Activated naive CD8-positive, alpha-beta T cell treated with anti-CD3 and anti-CD28 coated beads, Interleukin-2, amount 10 ng/mL, durations not matched to agents 7 days and 5 days (primary cell): ENCODE measurements at regions of chr1 and their contacts with region 1.

Region 1: GRCh38 chr1:145978854-145979759 is 14.6 kb downstream of the POLR3GL start:
- DNase-seq: peak; percentile 72
- ATAC-seq: peak; percentile 89
- H3K4me3 Mint-ChIP-seq: no peak overlapping the region
- H3K27ac Mint-ChIP-seq: no peak overlapping the region
- H3K4me1 Mint-ChIP-seq: peaks cover 27% of the 10 kb centered on the region
- H3K27me3 Mint-ChIP-seq: no peaks in the 10 kb centered on the region

Region 2: DNA sequence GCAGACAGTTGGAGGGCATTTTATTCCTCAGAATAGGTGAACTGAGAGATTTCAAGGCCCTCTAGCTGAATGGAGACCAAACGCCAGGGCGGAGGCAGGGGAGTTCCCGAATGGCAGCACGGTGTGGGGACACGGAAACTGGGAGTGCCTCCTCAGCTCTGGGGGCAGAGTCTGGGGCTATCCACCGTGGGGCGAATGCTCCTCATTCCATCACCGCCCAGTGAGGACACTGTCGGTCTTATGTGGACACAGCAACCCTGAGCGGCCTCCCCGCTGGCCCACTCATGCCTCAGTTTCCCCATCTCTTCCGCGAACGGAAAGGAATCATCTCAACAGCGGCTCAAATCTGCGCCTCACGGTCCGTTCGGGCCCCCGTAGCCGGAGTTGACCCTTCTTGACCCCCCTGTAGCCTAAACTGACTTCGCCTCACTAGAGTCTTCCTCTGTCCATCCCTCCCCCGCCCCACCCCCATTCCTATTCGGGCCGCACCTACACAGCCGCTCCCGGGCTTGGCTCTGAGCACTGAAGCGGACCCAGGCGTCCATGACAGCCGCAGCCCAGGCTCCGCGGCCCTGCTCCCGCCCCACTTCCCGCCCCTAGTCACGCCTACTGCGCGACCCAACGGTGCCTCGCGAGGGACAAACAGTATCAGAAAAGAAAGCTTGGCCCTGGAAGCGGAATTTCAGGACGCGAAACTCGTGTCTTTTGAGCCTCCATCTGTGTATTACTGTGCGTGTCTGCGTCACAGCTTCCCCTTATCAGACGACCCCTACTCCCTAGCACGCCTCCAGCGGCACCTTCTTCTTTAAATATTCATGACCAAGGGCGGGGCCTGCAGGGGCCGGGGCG is 60.7 kb before region 1 on chr1 and contains the start of gene PEX11B:
- POLR2A ChIA-PET with region 1: interaction called, 11 read pairs
- DNase-seq: peak; percentile 93
- ATAC-seq: peak; percentile 88
- H3K4me3 Mint-ChIP-seq: peak within 1 kb of the TSS; percentile 96
- H3K27ac Mint-ChIP-seq: peak within 1 kb of the TSS; percentile 98
- H3K4me1 Mint-ChIP-seq: peaks cover 34% of the 10 kb centered on the region
- H3K27me3 Mint-ChIP-seq: no peaks in the 10 kb centered on the region
- total RNA-seq, gene PEX11B: 31.0 to 35.8 TPM

Region 3: GRCh38 chr1:145927063-145927886 is 51.8 kb before region 1 on chr1 and contains the start of gene RBM8A:
- POLR2A ChIA-PET with region 1: interaction called, 23 read pairs
- DNase-seq: peak; percentile 83
- ATAC-seq: peak; percentile 96
- H3K4me3 Mint-ChIP-seq: no peak within 1 kb of the TSS
- H3K27ac Mint-ChIP-seq: peak within 1 kb of the TSS; percentile 93
- H3K4me1 Mint-ChIP-seq: peaks cover 17% of the 10 kb centered on the region
- H3K27me3 Mint-ChIP-seq: no peaks in the 10 kb centered on the region
- total RNA-seq, gene RBM8A: 157 to 160 TPM

Region 4: DNA sequence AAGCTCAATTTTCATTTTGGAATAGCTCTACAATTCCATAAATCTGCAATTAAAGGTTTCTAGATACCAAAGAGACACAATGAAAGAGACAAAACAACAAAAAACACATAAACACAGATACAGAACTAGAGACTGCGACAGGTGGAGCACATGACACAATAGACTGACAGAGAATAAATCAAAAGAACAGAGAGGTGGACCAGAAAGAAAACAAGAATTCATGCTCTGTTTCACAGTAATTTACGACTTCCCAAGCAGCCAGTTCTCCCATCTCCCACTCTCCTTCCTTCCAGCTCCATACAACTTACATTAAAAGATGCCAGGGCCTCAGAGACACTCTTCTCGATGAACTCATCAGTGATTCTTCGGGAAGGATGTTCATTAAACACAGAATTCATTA is 36.7 kb before region 1 on chr1:
- POLR2A ChIA-PET with region 1: no interaction called
- DNase-seq: no peak
- ATAC-seq: no peak
- H3K4me3 Mint-ChIP-seq: no peak overlapping the region
- H3K27ac Mint-ChIP-seq: no peak overlapping the region
- H3K4me1 Mint-ChIP-seq: peaks cover 2% of the 10 kb centered on the region
- H3K27me3 Mint-ChIP-seq: no peaks in the 10 kb centered on the region

Region 5: DNA sequence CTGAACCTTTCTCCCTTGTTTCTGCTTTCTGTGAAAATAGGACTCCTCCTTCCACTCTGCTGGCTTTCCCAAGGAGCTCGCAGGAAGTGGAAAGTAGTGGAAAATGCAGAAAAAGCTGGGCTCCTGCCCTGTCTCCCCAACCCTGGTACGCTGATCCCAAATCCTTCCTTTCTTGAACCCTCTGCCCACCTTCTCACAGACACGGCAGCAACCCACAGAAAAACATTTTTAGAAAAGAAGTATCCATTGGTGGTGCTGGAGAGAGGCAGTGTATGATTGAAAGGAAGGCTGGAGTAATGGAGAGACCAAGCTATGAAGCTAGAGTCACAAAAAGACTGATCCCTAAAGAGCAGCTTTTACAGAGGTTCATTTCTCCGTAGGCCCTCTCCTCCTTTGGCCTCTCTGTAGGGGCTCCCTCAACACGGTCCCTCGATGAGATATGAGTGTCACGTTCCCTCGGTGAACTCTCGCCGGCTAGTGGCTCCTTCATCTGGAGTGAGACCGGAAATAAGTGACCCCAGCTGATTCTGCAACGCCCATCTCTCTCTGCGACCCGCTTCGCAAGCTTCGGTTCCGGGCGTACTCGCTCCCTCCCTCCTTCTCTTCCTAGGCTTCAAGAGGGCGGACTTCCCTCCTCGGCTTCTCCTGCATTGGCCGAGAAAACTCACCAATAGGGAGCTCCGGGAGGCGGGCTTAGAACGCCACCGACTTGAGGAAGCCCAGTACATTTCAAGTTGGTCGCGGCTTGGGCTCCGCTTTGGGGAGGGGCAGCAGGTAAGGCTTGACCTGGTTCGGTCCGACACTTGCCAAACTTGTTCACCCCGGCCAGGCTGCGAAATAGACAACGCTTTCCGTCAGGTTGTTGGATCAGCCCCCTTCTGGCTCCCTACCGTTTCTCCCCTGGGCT is 14.9 kb before region 1 on chr1 and contains the starts of genes ANKRD34A and POLR3GL:
- POLR2A ChIA-PET with region 1: interaction called, 56 read pairs
- DNase-seq: peak; percentile 85
- ATAC-seq: peak; percentile 89
- H3K4me3 Mint-ChIP-seq: peak within 1 kb of the TSS; percentile 94
- H3K27ac Mint-ChIP-seq: peak within 1 kb of the TSS; percentile 94
- H3K4me1 Mint-ChIP-seq: peaks cover 39% of the 10 kb centered on the region
- H3K27me3 Mint-ChIP-seq: no peaks in the 10 kb centered on the region
- total RNA-seq, gene ANKRD34A: 2.2 to 2.8 TPM
- total RNA-seq, gene POLR3GL: 32.6 to 34.9 TPM

Region 6: GRCh38 chr1:145996433-145997015 is 17.4 kb after region 1 on chr1 and contains the start of gene TXNIP:
- POLR2A ChIA-PET with region 1: interaction called, 407 read pairs
- DNase-seq: peak; percentile 90
- ATAC-seq: peak; percentile 83
- H3K4me3 Mint-ChIP-seq: peak within 1 kb of the TSS; percentile 100
- H3K27ac Mint-ChIP-seq: peak within 1 kb of the TSS; percentile 99
- H3K4me1 Mint-ChIP-seq: peaks cover 54% of the 10 kb centered on the region
- H3K27me3 Mint-ChIP-seq: no peaks in the 10 kb centered on the region
- total RNA-seq, gene TXNIP: 678 to 725 TPM

Region 7: DNA sequence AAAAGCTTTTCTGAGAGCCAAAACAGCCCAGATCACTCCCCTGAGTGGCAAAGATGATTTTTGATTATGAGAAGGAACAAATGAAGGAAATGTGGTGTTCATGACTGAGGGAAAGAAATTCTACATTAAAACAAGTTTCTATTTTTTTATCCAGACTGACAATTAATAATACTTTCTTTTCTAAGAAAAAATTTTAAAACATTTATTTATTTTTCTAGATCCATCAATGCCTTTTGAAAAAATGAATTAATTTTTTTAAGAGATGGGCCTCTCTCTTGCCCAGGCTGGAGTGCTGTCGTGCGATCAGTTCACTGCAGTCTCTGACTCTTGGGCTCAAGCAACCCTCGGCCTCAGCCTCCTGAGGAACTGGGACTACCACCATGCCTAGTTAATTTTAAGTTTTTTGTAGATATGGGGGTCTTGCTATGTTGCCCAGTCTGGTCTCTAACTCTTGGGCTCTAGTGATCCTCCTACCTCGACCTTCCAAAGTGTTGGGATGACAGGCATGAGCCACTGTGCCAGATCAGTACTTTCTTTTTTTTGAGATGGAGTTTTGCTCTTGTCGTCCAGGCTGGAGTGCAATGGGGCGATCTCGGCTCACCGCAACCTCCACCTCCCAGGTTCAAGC is 28.5 kb after region 1 on chr1:
- POLR2A ChIA-PET with region 1: interaction called, 60 read pairs
- DNase-seq: no peak
- ATAC-seq: no peak
- H3K4me3 Mint-ChIP-seq: peak overlapping the region; percentile 77
- H3K27ac Mint-ChIP-seq: peak overlapping the region; percentile 88
- H3K4me1 Mint-ChIP-seq: peaks cover 30% of the 10 kb centered on the region
- H3K27me3 Mint-ChIP-seq: no peaks in the 10 kb centered on the region

Region 8: GRCh38 chr1:146036965-146037646 is 58.0 kb after region 1 on chr1:
- POLR2A ChIA-PET with region 1: interaction called, 10 read pairs
- DNase-seq: peak; percentile 79
- ATAC-seq: peak; percentile 45
- H3K4me3 Mint-ChIP-seq: peak overlapping the region; percentile 90
- H3K27ac Mint-ChIP-seq: peak overlapping the region; percentile 94
- H3K4me1 Mint-ChIP-seq: peaks cover 33% of the 10 kb centered on the region
- H3K27me3 Mint-ChIP-seq: peaks cover 11% of the 10 kb centered on the region